ENCODE measurements at regions of chr9 and their contacts with region 1.

Region 1: DNA sequence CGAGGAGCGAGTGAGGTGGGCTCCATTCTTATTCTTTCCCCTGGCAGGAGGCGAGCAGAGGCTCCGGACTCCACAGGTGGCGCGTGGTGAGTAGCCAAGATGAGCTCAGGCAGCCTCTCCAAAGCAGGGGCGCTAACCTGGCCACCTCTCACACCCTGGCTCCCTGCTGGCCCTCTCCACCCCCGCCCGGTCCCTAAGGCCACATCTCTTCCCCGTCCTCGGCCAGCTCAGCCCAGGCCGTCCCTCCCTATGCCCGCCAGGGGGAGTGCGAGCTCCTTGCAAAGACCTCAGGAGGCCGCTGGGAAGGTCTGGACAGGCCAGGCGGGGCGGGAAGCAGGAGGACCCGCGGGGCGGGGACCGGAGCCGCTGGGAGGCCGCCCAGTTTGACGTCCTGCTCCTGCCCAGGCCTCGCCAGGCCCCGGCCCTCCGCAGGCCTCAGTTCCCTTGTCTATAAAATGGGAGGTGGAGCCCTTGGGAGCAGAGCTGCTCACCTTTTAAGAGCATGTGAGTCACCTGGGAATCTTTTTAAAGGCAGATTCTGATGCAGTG is 46.3 kb upstream of the GGTA1 start:
- DNase-seq: peak; percentile 98
- H3K4me3 ChIP-seq: peak overlapping the region; percentile 20 to 50; a peak in 2 of 4 replicates
- H3K27ac ChIP-seq: no peak overlapping the region
- H3K4me1 ChIP-seq: peaks cover 0 to 8% of the 10 kb centered on the region in 2 experiments; a peak in 1 of 4 replicates
- H3K27me3 ChIP-seq: no peaks in the 10 kb centered on the region
- CTCF ChIP-seq: peak; percentile 88
- EP300 ChIP-seq: no peak
- RAD21 ChIP-seq: peak; percentile 97

Region 2: GRCh38 chr9:121566481-121567465 is 20.8 kb after region 1 on chr9:
- CTCF ChIA-PET with region 1: interaction called, 31 read pairs
- POLR2A ChIA-PET with region 1: interaction called, 3 read pairs
- DNase-seq: peak; percentile 72
- H3K4me3 ChIP-seq: peak overlapping the region; percentile 33 to 62; a peak in 3 of 4 replicates
- H3K27ac ChIP-seq: peak overlapping the region; percentile 92 to 97
- H3K4me1 ChIP-seq: peaks cover 26 to 53% of the 10 kb centered on the region in 2 experiments; a peak in 3 of 4 replicates
- H3K27me3 ChIP-seq: no peaks in the 10 kb centered on the region
- CTCF ChIP-seq: no peak
- EP300 ChIP-seq: peak in 1 of 2 experiments; percentile 39; a peak in 1 of 4 replicates
- RAD21 ChIP-seq: no peak

Region 3: GRCh38 chr9:121598965-121599871 is 53.3 kb after region 1 on chr9:
- CTCF ChIA-PET with region 1: interaction called, 12 read pairs
- POLR2A ChIA-PET with region 1: no interaction called
- DNase-seq: peak; percentile 97
- H3K4me3 ChIP-seq: peak overlapping the region; percentile 67 to 71
- H3K27ac ChIP-seq: peak overlapping the region in 1 of 2 experiments; percentile 60; a peak in 1 of 4 replicates
- H3K4me1 ChIP-seq: peaks cover 0 to 33% of the 10 kb centered on the region in 2 experiments; a peak in 1 of 4 replicates
- H3K27me3 ChIP-seq: no peaks in the 10 kb centered on the region
- CTCF ChIP-seq: no peak
- EP300 ChIP-seq: no peak
- RAD21 ChIP-seq: no peak

Region 4: DNA sequence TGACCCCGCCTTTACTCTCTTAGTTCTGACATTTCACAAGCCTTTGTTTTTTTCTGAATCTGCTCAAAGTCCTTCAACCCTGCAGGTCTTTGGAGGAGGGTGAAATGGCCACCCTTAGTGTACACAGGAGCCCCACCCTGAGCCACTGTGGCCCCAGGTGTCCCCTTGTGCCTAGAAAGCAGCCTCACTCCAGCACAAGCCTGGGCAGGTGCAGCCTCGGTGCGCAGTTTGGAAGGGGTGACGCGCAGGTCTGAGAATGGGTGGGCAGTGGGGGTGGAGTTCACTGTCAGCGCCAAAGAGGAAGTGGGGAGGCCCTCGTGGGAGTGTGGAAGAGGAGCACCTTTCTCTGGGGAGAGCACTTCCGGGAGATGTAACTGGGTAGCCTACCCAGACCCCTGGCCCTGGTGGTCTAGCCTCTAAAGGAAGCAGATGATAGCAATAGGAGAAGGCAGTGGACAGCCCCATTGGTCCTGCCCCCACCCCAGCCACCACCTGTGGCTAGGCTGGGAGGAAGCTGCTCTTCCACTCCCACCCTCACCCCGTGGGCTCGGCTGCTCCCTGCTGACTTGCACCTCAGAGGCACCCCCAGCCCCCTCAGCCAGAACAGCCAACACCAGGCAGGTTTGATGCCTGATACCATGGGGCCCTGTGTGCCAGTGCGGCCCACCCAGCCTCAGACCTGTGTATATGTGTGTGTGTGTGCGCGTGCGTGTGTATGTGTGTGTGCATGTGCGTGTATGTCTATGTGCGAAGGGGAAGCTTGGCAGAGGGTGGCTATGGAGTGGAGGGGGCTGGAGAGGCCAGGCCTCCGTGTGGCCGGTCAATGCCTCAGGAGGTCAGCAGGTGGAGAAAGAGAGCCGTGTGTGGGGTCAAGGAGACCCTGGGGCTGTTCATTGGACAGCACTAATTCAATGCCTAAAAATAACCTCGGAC is 88.6 kb after region 1 on chr9:
- CTCF ChIA-PET with region 1: interaction called, 17 read pairs
- POLR2A ChIA-PET with region 1: no interaction called
- DNase-seq: peak; percentile 86
- H3K4me3 ChIP-seq: no peak overlapping the region; a peak in 1 of 4 replicates
- H3K27ac ChIP-seq: no peak overlapping the region
- H3K4me1 ChIP-seq: peaks cover 8 to 52% of the 10 kb centered on the region in 2 experiments; a peak in 3 of 4 replicates
- H3K27me3 ChIP-seq: no peaks in the 10 kb centered on the region
- CTCF ChIP-seq: peak; percentile 68
- EP300 ChIP-seq: no peak
- RAD21 ChIP-seq: peak; percentile 89

Region 5: DNA sequence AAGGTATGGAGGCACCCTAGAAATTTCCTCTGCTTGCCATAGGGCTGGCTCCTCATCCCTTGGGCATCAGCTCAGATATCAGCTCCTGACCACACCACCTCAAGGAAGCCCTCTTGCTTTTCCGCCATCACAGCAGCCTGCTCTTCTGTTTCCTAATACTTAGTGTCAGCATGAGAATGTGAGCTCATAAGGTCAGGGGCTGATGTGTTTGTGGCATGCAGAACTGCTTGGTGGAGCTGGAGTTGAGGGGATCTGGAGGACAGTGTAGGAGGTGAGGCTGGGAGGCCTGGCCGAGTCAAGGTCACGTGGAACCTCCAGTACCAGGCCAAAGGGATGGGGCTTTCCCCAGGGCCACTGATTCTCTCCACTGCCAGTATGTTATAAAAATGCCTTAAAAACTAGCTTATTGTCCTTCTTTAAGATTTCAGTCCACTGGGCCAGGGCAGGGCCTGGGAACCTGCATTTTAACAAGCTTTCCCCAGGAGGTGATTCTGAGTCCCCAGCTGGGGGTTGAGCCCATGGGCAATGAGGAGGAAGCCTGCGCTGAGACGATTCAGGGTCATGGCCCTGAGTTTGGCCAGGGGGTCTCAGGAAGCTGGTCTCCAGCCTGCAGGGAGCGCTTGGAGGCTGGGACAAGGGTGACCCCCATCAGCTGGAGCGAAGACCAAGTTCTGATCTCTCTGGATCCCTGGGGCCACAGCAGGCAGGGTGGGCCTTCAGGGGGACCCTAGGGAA is 134.1 kb after region 1 on chr9:
- CTCF ChIA-PET with region 1: interaction called, 21 read pairs
- POLR2A ChIA-PET with region 1: no interaction called
- DNase-seq: no peak
- H3K4me3 ChIP-seq: no peak overlapping the region
- H3K27ac ChIP-seq: no peak overlapping the region
- H3K4me1 ChIP-seq: peaks cover 10 to 18% of the 10 kb centered on the region in 2 experiments; a peak in 3 of 4 replicates
- H3K27me3 ChIP-seq: no peaks in the 10 kb centered on the region
- CTCF ChIP-seq: no peak
- EP300 ChIP-seq: no peak
- RAD21 ChIP-seq: no peak

Region 6: DNA sequence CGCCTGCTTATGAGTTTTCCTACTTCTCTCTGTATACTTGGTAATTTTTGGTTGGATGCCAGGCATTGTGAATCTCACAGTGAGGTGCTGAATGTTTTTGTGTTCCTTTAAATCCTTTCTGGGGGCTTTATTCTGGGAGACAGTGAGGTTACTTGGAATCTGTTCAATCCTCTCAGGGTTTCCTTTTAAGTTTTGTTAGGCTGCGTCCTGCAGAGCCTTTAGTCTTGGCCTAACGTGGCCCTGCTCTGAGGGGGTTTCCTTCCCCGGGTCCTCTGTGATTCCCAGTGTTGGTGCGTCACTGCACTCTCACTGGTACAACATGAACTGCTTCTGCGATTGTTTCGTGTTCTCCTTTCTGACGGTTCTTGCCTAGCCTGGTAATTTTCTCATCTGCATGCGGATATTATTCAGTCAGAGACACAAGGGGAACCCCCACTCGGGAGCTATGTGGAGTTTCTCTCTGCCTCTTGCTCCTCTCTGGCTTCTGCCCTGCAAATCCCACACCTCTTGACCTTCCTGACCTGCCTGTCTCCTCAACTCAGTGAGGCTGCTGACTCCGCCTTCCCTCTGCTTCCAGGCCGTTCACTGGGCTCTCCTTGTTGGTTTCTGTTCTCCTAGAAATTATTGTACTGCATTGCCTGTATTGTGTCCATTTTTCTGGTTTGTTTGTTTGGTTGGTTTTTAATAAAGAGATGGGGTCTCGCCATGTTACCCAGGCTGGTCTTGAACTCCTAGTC is 233.6 kb after region 1 on chr9:
- CTCF ChIA-PET with region 1: no interaction called
- POLR2A ChIA-PET with region 1: no interaction called
- DNase-seq: no peak
- H3K4me3 ChIP-seq: no peak overlapping the region
- H3K27ac ChIP-seq: peak overlapping the region in 1 of 2 experiments; percentile 45; a peak in 1 of 4 replicates
- H3K4me1 ChIP-seq: peaks cover 0 to 18% of the 10 kb centered on the region in 2 experiments; a peak in 2 of 4 replicates
- H3K27me3 ChIP-seq: no peaks in the 10 kb centered on the region
- CTCF ChIP-seq: no peak
- EP300 ChIP-seq: no peak
- RAD21 ChIP-seq: no peak

Region 7: DNA sequence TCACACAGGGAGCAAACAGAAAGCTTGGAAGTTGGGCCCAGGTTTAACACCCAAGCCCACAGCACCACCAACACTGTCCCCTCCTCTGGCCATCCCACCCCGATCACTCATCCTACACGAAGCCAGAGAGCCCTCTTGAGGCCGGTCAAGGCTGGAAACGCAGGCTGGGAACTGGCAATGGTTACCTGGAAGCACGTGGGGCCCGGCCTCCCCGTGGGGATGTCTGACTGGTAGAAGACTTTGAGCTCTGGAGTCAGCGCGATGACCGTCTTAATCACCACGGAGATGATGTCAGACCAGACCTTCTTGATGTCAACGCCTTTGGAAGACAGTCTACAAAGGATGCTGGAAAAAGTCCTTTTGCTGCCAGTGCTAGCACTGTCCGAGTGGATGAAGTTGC is 443.1 kb after region 1 on chr9:
- CTCF ChIA-PET with region 1: interaction called, 27 read pairs
- POLR2A ChIA-PET with region 1: no interaction called
- DNase-seq: no peak
- H3K4me3 ChIP-seq: no peak overlapping the region
- H3K27ac ChIP-seq: no peak overlapping the region
- H3K4me1 ChIP-seq: peaks cover 8 to 10% of the 10 kb centered on the region in 2 experiments; a peak in 3 of 4 replicates
- H3K27me3 ChIP-seq: no peaks in the 10 kb centered on the region
- CTCF ChIP-seq: peak; percentile 44
- EP300 ChIP-seq: no peak
- RAD21 ChIP-seq: peak; percentile 55